ENCODE measurements at regions of chr6 and their contacts with region 1.

Region 1: DNA sequence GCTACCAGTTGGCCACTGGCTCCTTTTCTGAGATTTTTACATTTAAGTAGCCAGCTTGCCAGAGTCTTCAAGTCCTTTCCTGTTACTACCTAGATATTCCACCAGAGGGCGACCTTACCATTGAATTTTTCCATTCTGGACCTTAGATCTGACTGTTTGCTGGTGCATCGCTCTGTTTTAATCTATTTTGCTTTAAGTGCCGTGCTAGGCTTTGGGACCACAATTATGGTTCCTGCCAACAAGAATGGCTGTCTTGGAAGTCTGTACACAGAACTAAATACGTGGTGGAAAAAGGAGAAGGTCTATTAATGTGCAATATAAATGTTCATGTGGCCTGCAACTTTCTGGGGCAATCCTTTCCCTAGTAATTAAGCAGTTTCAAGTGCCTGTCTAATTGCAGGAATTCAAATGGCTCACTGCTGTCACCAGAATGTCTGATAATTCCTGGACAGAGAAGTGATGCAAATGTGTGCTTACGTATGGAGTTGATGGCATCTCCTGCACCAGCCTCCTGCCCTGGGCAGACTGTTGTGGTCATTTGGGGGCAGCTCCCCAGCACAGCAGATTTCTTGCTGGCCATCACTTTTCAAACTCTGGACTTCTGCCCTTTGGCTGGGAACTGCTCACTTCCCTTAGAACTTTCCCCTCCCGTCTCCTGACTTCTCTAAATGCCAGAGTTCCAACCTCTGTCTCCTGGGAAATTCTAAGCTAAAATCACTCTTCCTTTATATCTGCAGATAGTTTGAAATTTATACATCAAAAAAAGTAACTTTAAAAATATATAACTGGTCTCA is 5.6 kb upstream of the HLA-DOA start:
- DNase-seq: no peak
- H3K4me3 ChIP-seq: no peak overlapping the region
- H3K27ac ChIP-seq: peak overlapping the region in 2 of 4 donors; percentile 26 to 38
- H3K4me1 ChIP-seq: peaks cover 0 to 19% (median 14%) of the 10 kb centered on the region in 4 donors
- H3K27me3 ChIP-seq: peaks cover 0 to 15% (median 10%) of the 10 kb centered on the region in 3 donors
- CTCF ChIP-seq: peak; percentile 55 to 83 (median 79)
- EP300 ChIP-seq: no peak
- POLR2A ChIP-seq: no peak

Region 2: DNA sequence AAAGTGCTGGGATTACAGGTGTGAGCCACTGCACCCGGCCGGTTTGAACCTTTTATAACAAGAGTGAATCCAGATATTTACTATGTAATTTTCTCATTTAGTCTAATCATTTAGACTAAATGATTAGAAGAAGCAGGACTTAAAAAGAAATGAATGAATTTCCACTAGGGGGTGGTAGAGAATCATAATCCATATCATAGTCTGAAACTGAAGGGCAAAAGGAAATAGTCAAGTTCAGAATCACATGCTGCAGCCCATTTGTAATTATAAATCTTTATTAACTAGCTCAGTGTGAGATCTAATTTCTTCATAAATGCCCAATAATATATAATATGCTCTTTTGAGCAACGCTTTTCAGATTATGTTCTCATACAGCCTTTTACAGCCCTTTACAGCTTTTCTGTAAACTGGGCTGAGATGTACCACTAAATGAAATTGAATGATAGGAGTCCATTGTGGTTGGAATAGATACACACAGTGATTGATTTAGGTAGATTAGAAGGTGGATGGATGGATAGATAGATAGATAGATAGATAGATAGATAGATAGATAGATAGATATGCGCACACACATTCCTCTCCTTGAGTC is 129.2 kb before region 1 on chr6:
- intact Hi-C with region 1: no loop called
- DNase-seq: no peak
- H3K4me3 ChIP-seq: no peak overlapping the region
- H3K27ac ChIP-seq: peak overlapping the region in 3 of 4 donors; percentile 49 to 74 (median 67)
- H3K4me1 ChIP-seq: peaks cover 0 to 22% (median 20%) of the 10 kb centered on the region in 4 donors
- H3K27me3 ChIP-seq: no peaks in the 10 kb centered on the region
- CTCF ChIP-seq: peak; percentile 25 to 66 (median 56)
- EP300 ChIP-seq: no peak
- POLR2A ChIP-seq: no peak

Region 3: DNA sequence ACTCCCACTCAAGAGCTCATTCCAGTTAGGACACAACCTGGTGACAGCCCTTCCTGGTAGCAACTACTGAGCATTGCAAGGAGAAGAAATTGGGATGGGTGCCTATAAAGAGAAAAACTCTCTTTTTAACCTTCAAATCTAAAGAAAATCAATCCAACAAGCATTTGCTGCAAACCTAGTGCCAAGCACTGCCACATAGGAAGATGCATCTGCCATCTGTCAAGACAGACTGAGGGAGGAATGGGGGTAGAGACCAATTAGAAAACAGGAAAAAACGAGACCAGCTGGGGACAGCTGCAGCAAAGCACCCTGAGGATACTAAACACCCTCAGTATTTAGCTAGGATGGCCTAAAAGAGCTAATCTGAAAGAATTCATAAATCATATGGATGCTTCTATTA is 102.1 kb before region 1 on chr6:
- intact Hi-C with region 1: no loop called
- DNase-seq: no peak
- H3K4me3 ChIP-seq: no peak overlapping the region
- H3K27ac ChIP-seq: no peak overlapping the region
- H3K4me1 ChIP-seq: no peaks in the 10 kb centered on the region
- H3K27me3 ChIP-seq: peaks cover 0 to 8% (median 0%) of the 10 kb centered on the region in 3 donors
- CTCF ChIP-seq: no peak
- EP300 ChIP-seq: no peak
- POLR2A ChIP-seq: no peak

Region 4: GRCh38 chr6:33082702-33083101 is 67.7 kb after region 1 on chr6:
- intact Hi-C with region 1: loop called (anchors 2 kb)
- DNase-seq: no peak
- H3K4me3 ChIP-seq: no peak overlapping the region
- H3K27ac ChIP-seq: peak overlapping the region in 3 of 4 donors; percentile 6 to 39 (median 24)
- H3K4me1 ChIP-seq: peaks cover 0 to 20% (median 14%) of the 10 kb centered on the region in 4 donors
- H3K27me3 ChIP-seq: no peaks in the 10 kb centered on the region
- CTCF ChIP-seq: peak in 2 of 4 experiments; percentile 41 to 46
- EP300 ChIP-seq: no peak
- POLR2A ChIP-seq: no peak

Region 5: DNA sequence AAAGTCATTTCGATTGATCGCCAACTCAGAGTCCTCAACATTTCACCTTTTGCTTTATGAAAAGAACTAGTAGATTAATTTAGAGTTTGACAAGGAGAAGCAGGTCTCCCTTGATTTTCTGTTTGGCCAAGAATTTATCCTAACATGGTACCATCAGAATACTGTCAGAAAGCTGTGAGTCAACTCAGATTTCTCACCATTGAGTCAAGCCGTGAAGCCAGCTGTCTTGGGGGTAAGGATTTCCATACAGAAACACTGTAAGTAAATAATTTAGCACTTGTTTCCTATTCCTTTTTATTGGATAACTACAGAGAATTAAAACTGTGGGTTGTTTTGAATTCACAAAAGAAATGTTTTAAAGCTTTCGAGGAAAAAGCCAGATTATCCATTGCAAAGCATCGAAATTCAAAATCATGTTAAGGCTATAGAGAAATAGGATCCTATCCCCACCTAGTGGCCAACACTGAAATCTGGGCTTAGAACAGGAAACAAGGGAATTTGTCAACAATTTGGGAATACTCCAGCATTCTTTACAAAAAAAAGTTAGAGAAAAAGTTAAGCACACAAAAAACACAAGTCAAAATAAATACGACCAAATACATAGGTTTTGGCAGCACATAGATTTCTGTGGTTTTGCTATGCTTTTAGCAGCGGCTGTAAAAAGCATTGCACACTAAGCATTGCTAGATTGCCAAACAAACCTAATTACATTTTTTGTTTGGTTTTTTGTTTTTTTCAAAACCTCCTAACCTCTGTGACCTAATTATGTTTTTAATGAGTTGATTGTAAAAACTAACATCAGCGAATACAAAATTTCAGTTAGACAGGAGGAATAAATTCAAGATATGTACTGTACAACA is 133.0 kb after region 1 on chr6:
- intact Hi-C with region 1: loop called (anchors 2 kb)
- DNase-seq: no peak
- H3K4me3 ChIP-seq: no peak overlapping the region
- H3K27ac ChIP-seq: no peak overlapping the region
- H3K4me1 ChIP-seq: no peaks in the 10 kb centered on the region
- H3K27me3 ChIP-seq: peaks cover 0 to 7% (median 0%) of the 10 kb centered on the region in 3 donors
- CTCF ChIP-seq: peak in 3 of 4 experiments; percentile 64 to 74 (median 74)
- EP300 ChIP-seq: no peak
- POLR2A ChIP-seq: no peak

Region 6: DNA sequence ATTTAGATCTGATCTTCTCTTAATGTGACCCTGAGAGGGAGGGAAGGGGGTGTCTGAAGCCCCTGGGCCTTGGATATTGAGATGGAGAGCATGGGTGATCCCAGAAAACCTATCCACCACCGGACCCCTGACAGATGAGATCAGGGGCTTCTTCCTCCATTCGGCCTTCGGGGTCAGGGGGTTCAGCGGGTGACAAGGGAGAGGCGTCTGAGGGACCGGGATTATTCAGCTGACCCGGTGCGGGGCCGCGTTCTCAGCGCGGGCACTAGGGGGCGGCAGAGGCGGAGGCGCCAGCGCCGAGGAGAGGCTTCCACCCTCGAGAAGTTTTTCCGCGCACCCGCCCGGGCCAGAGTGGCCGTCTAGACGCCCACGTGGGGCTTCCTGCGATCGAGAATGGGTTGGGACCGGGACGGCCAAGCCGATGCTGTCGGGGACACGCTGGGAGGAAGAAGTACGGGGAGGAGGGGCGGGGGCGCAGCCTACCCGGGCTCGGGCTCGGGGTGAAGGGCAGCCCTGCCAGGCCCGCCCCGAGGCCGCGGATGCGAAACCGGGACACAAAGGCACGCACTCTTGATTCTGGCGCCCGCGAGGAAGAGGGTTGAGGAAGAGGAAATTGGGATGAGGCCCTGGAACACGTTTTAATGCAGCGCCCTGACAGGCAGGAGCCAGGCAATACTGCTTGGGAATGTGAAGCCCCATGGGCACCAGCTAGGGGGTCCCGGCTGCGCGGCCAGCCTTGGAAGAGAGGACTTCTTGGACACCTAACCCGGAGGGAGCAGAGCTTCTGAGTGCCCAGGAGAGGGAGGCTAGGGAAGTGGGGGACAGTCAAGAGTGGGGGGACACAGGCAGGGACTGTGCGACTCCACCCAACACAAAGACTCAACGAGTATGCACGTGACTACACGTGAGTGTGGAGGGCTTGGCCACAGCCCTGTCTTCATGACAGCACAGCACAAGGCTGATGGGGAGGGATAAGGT is 146.6 kb after region 1 on chr6:
- intact Hi-C with region 1: loop called (anchors 5 kb)
- DNase-seq: peak; percentile 89
- H3K4me3 ChIP-seq: peak overlapping the region; percentile 40 to 58 (median 45)
- H3K27ac ChIP-seq: peak overlapping the region; percentile 72 to 90 (median 79)
- H3K4me1 ChIP-seq: peaks cover 0 to 21% (median 17%) of the 10 kb centered on the region in 4 donors
- H3K27me3 ChIP-seq: no peaks in the 10 kb centered on the region
- CTCF ChIP-seq: peak; percentile 87 to 94 (median 92)
- EP300 ChIP-seq: no peak
- POLR2A ChIP-seq: no peak